Stomach (tissue), 19 donors: ENCODE measurements at regions of chr20 and their contacts with region 1.

Region 1: GRCh38 chr20:47785854-47786764 is 828 bp upstream of the SULF2 start:
- DNase-seq: peak; percentile 53 to 94
- H3K4me3 ChIP-seq: peak overlapping the region; percentile 62 to 73 (median 68)
- H3K27ac ChIP-seq: peak overlapping the region; percentile 54 to 90 (median 80)
- H3K4me1 ChIP-seq: peaks cover 21 to 54% (median 37%) of the 10 kb centered on the region in 4 donors
- H3K27me3 ChIP-seq: peaks cover 0 to 44% (median 0%) of the 10 kb centered on the region in 3 donors
- CTCF ChIP-seq: peak in 5 of 7 experiments; percentile 36 to 68 (median 61)
- EP300 ChIP-seq: no peak
- POLR2A ChIP-seq: no peak

Region 2: GRCh38 chr20:47663333-47664067 is 122.6 kb before region 1 on chr20:
- intact Hi-C with region 1: loop called (anchors 10 kb)
- DNase-seq: peak; percentile 79 to 93
- H3K4me3 ChIP-seq: no peak overlapping the region
- H3K27ac ChIP-seq: no peak overlapping the region
- H3K4me1 ChIP-seq: peaks cover 0 to 14% (median 9%) of the 10 kb centered on the region in 4 donors
- H3K27me3 ChIP-seq: no peaks in the 10 kb centered on the region
- CTCF ChIP-seq: peak in 6 of 7 experiments; percentile 46 to 96 (median 87)
- EP300 ChIP-seq: no peak
- POLR2A ChIP-seq: no peak

Region 3: GRCh38 chr20:47824977-47825762 is 39.1 kb after region 1 on chr20:
- intact Hi-C with region 1: no loop called
- DNase-seq: no peak
- H3K4me3 ChIP-seq: no peak overlapping the region
- H3K27ac ChIP-seq: no peak overlapping the region
- H3K4me1 ChIP-seq: no peaks in the 10 kb centered on the region
- H3K27me3 ChIP-seq: peaks cover 0 to 21% (median 7%) of the 10 kb centered on the region in 3 donors
- CTCF ChIP-seq: no peak
- EP300 ChIP-seq: no peak
- POLR2A ChIP-seq: no peak